CD4-positive, alpha-beta T cell (primary cell): ENCODE measurements at regions of chr1 and their contacts with region 1.

Region 1: DNA sequence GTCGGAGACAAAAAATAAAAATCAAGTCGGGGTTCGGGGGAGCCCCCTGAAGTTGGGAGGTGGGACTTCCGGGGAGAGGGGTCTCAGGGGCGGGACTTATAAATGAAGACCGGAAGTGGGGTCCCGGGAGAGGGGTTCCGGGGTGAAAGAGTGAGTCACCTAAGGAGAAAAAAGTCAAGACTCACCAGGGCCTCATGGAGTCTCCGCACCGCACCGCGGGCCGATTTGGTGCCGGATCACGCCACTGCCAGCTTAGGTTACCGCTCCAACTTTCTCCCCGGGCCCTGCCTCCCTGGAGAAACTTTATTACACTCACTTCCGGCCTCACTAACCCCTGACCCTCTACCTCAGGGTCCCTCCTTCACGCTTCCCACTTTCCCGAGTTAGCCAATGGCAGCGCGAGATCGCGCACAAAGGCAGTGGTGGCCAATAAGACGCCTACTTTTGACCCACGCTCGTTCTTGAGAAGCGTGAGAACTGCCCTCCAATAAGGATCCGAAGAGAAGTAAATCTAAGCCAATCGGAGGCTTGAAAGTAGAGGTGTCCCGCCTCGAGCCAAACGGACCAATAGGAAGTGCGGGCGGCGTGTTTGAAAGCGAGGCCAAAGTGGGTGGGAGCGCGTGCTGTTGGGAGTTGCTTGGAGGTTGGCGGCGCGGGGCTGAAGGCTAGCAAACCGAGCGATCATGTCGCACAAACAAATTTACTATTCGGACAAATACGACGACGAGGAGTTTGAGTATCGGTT is at the start of gene CKS1B:
- DNase-seq: peak; percentile 93 to 100 (median 96)
- ATAC-seq: peak; percentile 87
- H3K4me3 ChIP-seq: peak within 1 kb of the TSS; percentile 81
- H3K4me3 Mint-ChIP-seq: no peak within 1 kb of the TSS
- H3K27ac ChIP-seq: peak within 1 kb of the TSS; percentile 94 to 99
- H3K27ac Mint-ChIP-seq: no peak within 1 kb of the TSS
- H3K4me1 ChIP-seq: peaks cover 49% of the 10 kb centered on the region
- H3K4me1 Mint-ChIP-seq: peaks cover 26% of the 10 kb centered on the region
- H3K27me3 ChIP-seq: no peaks in the 10 kb centered on the region
- H3K27me3 Mint-ChIP-seq: no peaks in the 10 kb centered on the region
- CTCF ChIP-seq: no peak
- total RNA-seq, gene CKS1B: 1.4 to 3.9 TPM

Region 2: GRCh38 chr1:154955718-154956543 is 18.3 kb before region 1 on chr1 and contains the start of gene PBXIP1:
- CTCF ChIA-PET with region 1: interaction called, 40 read pairs
- POLR2A ChIA-PET with region 1: interaction called, 42 read pairs
- intact Hi-C with region 1: loop called (anchors 1 to 2 kb)
- DNase-seq: peak; percentile 64 to 95 (median 78)
- ATAC-seq: peak; percentile 40
- H3K4me3 ChIP-seq: peak within 1 kb of the TSS; percentile 69
- H3K4me3 Mint-ChIP-seq: peak within 1 kb of the TSS; percentile 95
- H3K27ac ChIP-seq: peak within 1 kb of the TSS; percentile 100
- H3K27ac Mint-ChIP-seq: peak within 1 kb of the TSS; percentile 96
- H3K4me1 ChIP-seq: peaks cover 96% of the 10 kb centered on the region
- H3K4me1 Mint-ChIP-seq: peaks cover 57% of the 10 kb centered on the region
- H3K27me3 ChIP-seq: no peaks in the 10 kb centered on the region
- H3K27me3 Mint-ChIP-seq: no peaks in the 10 kb centered on the region
- CTCF ChIP-seq: peak; percentile 40
- total RNA-seq, gene PBXIP1: 434 to 440 TPM

Region 3: DNA sequence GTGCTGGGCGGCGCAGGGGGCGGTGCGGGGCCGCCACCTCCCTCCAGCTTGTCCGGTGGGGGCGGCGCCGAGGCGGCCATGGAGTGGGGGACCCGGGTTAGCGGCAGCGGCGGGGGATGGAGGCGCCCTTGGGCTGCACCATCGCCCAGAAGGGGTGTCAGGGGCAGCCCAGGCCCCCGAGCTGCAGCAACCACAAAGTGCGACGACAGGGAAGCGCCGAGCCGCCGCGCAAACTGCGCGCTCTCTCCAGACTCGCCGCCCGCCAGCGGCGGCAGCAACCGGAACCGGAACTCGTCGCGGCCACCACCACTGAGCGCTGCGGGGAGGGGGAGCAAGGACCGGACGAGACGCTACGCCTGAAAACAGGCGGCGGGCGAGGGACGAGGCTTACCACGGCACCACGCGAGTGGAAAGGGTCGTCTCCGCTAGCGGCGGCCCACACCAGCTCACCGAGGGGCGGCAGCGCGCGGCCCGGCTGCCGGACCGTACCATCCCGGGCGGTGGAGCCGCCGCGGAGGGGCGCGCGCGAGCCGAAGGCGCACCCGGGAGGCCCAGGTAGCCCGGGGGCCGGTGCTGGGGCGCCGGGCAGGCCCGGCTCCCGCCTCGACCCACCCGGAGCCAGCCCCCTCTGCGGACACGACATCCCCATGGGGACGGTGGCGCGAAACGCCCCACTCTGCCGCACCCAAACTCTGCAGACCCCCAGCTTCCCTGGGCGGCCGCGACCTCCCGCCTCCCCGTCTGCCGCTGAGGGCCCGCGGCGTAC is 12.6 kb before region 1 on chr1 and contains the start of gene PYGO2:
- CTCF ChIA-PET with region 1: interaction called, 40 read pairs
- POLR2A ChIA-PET with region 1: interaction called, 42 read pairs
- intact Hi-C with region 1: loop called in 1 of 2 experiments (anchors 2 kb)
- DNase-seq: peak; percentile 65 to 91 (median 77)
- ATAC-seq: peak; percentile 72
- H3K4me3 ChIP-seq: peak within 1 kb of the TSS; percentile 68
- H3K4me3 Mint-ChIP-seq: peak within 1 kb of the TSS; percentile 99
- H3K27ac ChIP-seq: peak within 1 kb of the TSS; percentile 88 to 95
- H3K27ac Mint-ChIP-seq: peak within 1 kb of the TSS; percentile 98
- H3K4me1 ChIP-seq: peaks cover 58% of the 10 kb centered on the region
- H3K4me1 Mint-ChIP-seq: peaks cover 20% of the 10 kb centered on the region
- H3K27me3 ChIP-seq: no peaks in the 10 kb centered on the region
- H3K27me3 Mint-ChIP-seq: no peaks in the 10 kb centered on the region
- CTCF ChIP-seq: peak; percentile 60
- total RNA-seq, gene PYGO2: 30.3 to 32.8 TPM

Region 4: GRCh38 chr1:154992721-154993571 is 18.7 kb after region 1 on chr1:
- CTCF ChIA-PET with region 1: interaction called, 24 read pairs
- POLR2A ChIA-PET with region 1: interaction called, 7 read pairs
- intact Hi-C with region 1: loop called in 1 of 2 experiments (anchors 1 kb)
- DNase-seq: no peak
- ATAC-seq: no peak
- H3K4me3 ChIP-seq: no peak overlapping the region
- H3K4me3 Mint-ChIP-seq: no peak overlapping the region
- H3K27ac ChIP-seq: no peak overlapping the region
- H3K27ac Mint-ChIP-seq: no peak overlapping the region
- H3K4me1 ChIP-seq: peaks cover 33% of the 10 kb centered on the region
- H3K4me1 Mint-ChIP-seq: peaks cover 33% of the 10 kb centered on the region
- H3K27me3 ChIP-seq: no peaks in the 10 kb centered on the region
- H3K27me3 Mint-ChIP-seq: no peaks in the 10 kb centered on the region
- CTCF ChIP-seq: no peak

Region 5: DNA sequence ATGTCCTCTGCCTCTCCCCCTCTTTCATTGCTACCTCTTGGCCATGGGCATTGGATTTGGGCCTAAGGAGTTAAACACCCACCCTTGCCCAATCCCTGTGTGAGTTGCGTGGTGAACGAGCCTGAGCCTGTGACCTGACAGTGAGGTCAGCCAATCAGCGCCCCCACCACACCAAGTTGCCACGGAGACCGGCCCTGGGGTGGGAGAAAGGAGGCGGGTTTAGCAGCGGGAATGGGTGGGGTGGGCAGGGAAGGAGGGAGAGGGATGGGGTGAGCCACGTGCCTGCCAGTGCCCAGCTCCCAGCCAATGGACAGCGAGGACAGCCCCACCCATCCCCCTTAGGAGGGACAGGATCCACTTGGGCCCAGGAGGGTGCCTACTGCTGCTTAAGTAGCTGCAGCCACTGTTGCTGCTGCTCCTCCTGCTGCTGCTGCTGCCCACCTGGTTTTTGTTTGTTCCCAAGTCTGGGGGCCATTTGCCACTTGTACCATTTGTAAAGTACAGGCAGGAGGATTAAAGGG is 37.9 kb after region 1 on chr1:
- CTCF ChIA-PET with region 1: interaction called, 71 read pairs
- POLR2A ChIA-PET with region 1: interaction called, 46 read pairs
- intact Hi-C with region 1: loop called (anchors 1 to 2 kb)
- DNase-seq: peak in 4 of 14 experiments; percentile 42 to 58 (median 51)
- ATAC-seq: no peak
- H3K4me3 ChIP-seq: peak overlapping the region; percentile 89
- H3K4me3 Mint-ChIP-seq: peak overlapping the region; percentile 91
- H3K27ac ChIP-seq: peak overlapping the region; percentile 87 to 88
- H3K27ac Mint-ChIP-seq: peak overlapping the region; percentile 92
- H3K4me1 ChIP-seq: peaks cover 99% of the 10 kb centered on the region
- H3K4me1 Mint-ChIP-seq: peaks cover 80% of the 10 kb centered on the region
- H3K27me3 ChIP-seq: no peaks in the 10 kb centered on the region
- H3K27me3 Mint-ChIP-seq: no peaks in the 10 kb centered on the region
- CTCF ChIP-seq: no peak